Vagina (tissue), 2 donors: ENCODE measurements at regions of chr18 and their contacts with region 1.

Region 1: DNA sequence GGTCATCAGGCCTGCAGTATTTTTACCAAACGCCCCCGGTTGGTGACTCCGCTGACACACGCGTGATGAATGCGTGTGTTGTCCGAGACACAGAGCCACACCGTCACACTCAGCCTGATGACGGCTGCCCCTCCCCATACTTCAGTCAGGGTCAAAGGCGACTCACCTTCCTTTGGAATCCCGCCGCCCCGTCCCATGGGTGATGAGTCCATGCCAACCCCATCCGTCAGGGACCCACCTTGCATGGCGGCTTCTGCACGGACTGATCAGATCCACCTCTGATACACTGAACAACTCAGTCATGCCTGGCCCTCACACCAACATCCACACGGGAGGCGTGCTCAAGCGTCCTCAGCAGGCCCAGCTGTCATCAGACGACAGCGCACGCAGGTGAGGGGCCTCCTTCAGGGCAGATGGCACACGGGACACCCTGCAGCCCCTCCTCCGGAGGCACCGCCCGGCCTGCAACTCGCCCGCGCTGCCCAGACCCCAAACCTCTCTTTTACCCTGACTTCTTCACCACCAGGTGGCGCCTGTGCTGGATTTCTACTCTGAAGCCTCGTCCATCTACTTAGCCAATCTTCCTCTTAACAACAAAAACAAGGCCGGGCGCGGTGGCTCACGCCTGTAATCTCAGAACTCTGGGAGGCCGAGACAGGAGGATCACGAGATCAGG is 89.2 kb downstream of the ZNF516 start:
- DNase-seq: peak in 1 of 2 donors; percentile 72
- H3K4me3 ChIP-seq: no peak overlapping the region
- H3K27ac ChIP-seq: peak overlapping the region; percentile 54
- H3K4me1 ChIP-seq: peaks cover 71% of the 10 kb centered on the region
- H3K27me3 ChIP-seq: no peaks in the 10 kb centered on the region
- CTCF ChIP-seq: peak in 1 of 3 experiments; percentile 36
- POLR2A ChIP-seq: no peak

Region 2: DNA sequence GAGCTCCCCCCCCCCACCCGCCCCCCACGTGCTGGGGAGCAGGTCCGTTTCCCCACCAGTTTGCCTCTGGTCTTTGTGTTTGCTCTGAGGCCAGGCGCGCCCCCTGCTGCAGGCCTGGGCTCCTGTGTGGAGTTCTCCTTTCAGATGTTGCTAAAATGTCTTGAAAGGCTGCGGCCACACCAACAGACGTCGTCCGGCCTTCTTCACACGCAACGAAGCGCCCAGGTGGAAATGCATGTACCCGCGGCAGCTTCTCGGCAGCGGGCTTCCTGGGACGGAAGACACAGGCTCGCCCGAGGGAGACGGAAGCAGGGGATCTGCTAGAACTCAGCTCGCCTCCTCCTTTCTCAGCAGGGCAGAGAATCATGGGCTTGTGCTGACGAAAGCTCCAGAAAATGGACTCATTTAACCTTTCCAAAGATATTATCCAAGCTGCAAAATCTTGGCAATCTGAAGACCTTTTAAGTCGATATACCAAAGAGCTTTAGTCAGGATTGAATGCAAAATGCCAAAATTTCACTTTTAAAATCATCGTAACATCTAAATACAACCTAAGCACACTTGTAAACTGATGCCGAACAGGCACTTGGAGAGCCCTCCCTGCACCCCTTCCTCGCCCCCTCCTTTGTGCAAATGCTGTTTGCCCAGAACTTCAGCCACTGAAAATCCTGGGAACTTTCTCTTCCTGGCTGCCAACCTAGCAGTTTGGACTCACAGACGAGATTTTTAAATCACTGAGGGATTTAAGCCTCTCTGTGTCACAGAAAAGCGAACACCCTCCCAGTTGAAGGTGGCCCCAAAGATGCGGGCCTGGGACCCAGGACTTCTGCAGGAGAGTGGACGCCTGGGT is 214.7 kb after region 1 on chr18:
- intact Hi-C with region 1: loop called (anchors 5 kb)
- DNase-seq: no peak
- H3K4me3 ChIP-seq: peak overlapping the region; percentile 35 to 46
- H3K27ac ChIP-seq: peak overlapping the region; percentile 84
- H3K4me1 ChIP-seq: peaks cover 42% of the 10 kb centered on the region
- H3K27me3 ChIP-seq: no peaks in the 10 kb centered on the region
- CTCF ChIP-seq: peak in 2 of 3 experiments; percentile 31 to 54
- POLR2A ChIP-seq: no peak

Region 3: GRCh38 chr18:76686737-76687262 is 281.0 kb after region 1 on chr18:
- intact Hi-C with region 1: loop called (anchors 5 kb)
- DNase-seq: peak in 1 of 2 donors; percentile 96
- H3K4me3 ChIP-seq: no peak overlapping the region
- H3K27ac ChIP-seq: peak overlapping the region; percentile 88
- H3K4me1 ChIP-seq: peaks cover 27% of the 10 kb centered on the region
- H3K27me3 ChIP-seq: no peaks in the 10 kb centered on the region
- CTCF ChIP-seq: peak; percentile 26 to 68 (median 52)
- POLR2A ChIP-seq: no peak